ENCODE measurements at regions of chr21 and their contacts with region 1.

Region 1: GRCh38 chr21:41768437-41769061 is 1.7 kb upstream of the RIPK4 start:
- DNase-seq: no peak
- ATAC-seq: peak; percentile 31 to 44
- H3K4me3 ChIP-seq: peak overlapping the region; percentile 24
- H3K27ac ChIP-seq: no peak overlapping the region
- H3K4me1 ChIP-seq: peaks cover 2% of the 10 kb centered on the region
- H3K27me3 ChIP-seq: no peaks in the 10 kb centered on the region

Region 2: GRCh38 chr21:41641821-41642701 is 126.5 kb before region 1 on chr21:
- intact Hi-C with region 1: loop called in 1 of 4 experiments (anchors 10 kb)
- DNase-seq: peak; percentile 84 to 93 (median 91)
- ATAC-seq: peak; percentile 86 to 91
- H3K4me3 ChIP-seq: no peak overlapping the region
- H3K27ac ChIP-seq: peak overlapping the region; percentile 92
- H3K4me1 ChIP-seq: peaks cover 4% of the 10 kb centered on the region
- H3K27me3 ChIP-seq: no peaks in the 10 kb centered on the region